K562 (cell line): ENCODE measurements at regions of chr6 and their contacts with region 1.

Region 1: GRCh38 chr6:163956571-163957407 is 542.3 kb downstream of the QKI start:
- DNase-seq: peak; percentile 88 to 92 (median 90)
- ATAC-seq: peak; percentile 99
- H3K4me3 ChIP-seq: no peak overlapping the region
- H3K27ac ChIP-seq: no peak overlapping the region
- H3K4me1 ChIP-seq: no peaks in the 10 kb centered on the region
- H3K27me3 ChIP-seq: peaks cover 26 to 36% of the 10 kb centered on the region in 2 experiments
- CTCF ChIP-seq: peak; percentile 95 to 98 (median 97)
- EP300 ChIP-seq: no peak
- POLR2A ChIP-seq: no peak
- RAD21 ChIP-seq: peak; percentile 96 to 97

Region 2: DNA sequence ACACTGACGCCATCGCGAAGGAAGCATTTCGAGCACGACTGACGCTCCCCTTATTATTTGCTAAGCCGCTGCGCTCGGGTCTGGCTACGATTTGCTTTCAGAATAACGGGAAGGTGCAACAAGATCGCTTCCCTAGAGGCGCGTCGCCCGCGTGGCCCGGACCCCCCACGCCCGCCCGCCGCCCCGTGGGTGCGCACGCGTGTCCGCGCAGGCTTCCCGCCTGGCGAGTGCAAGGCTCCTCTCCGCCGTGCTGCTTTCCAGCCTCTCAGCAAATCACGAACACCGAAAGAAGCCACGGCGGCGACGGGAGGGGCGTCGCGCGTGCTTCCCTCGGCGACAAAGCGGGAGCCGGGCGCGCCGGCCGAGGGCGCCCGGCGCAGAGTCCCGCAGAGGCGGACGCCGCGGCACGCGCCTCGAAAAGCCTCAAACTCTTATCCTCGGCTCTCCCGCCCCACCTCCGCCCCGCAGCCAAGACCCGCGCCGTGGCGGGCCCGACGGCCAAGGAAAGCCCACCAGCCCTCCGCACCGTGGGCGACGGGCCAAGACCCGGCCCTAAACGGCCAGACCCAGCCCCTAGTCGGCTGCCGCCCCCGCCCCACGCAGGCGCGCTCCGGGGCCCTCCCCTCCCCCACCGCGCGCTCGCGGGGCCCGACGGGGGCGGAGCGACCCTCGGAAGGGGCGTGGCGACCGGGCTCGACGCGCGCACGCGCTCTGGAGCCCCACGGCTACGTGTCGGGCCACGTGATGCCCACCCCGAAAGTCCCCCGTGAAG is 543.3 kb before region 1 on chr6:
- CTCF ChIA-PET with region 1: interaction called, 4 read pairs
- POLR2A ChIA-PET with region 1: no interaction called
- in situ Hi-C with region 1: no loop called
- intact Hi-C with region 1: loop called (anchors 1 kb)
- DNase-seq: peak; percentile 92 to 98 (median 97)
- ATAC-seq: peak; percentile 60
- H3K4me3 ChIP-seq: peak overlapping the region; percentile 87
- H3K27ac ChIP-seq: peak overlapping the region; percentile 94
- H3K4me1 ChIP-seq: peaks cover 0 to 12% of the 10 kb centered on the region in 2 experiments; a peak in 4 of 5 replicates
- H3K27me3 ChIP-seq: no peaks in the 10 kb centered on the region
- CTCF ChIP-seq: 0 out of 6 replicates have a peak, but pooled peaks of 1 of the 3 experiments have one; percentile 6
- EP300 ChIP-seq: no peak
- POLR2A ChIP-seq: peak; percentile 79
- RAD21 ChIP-seq: 0 out of 4 replicates have a peak, but pooled peaks of 1 of the 2 experiments have one; percentile 1

Region 3: GRCh38 chr6:163554663-163555062 is 402.1 kb before region 1 on chr6:
- CTCF ChIA-PET with region 1: no interaction called
- POLR2A ChIA-PET with region 1: no interaction called
- in situ Hi-C with region 1: no loop called
- intact Hi-C with region 1: loop called (anchors 2 kb)
- DNase-seq: peak; percentile 47 to 71 (median 54)
- ATAC-seq: peak; percentile 91
- H3K4me3 ChIP-seq: no peak overlapping the region
- H3K27ac ChIP-seq: no peak overlapping the region
- H3K4me1 ChIP-seq: no peaks in the 10 kb centered on the region
- H3K27me3 ChIP-seq: no peaks in the 10 kb centered on the region
- CTCF ChIP-seq: peak; percentile 73 to 78 (median 73)
- EP300 ChIP-seq: no peak
- POLR2A ChIP-seq: no peak
- RAD21 ChIP-seq: peak; percentile 58 to 83

Region 4: GRCh38 chr6:163651915-163652668 is 304.7 kb before region 1 on chr6:
- CTCF ChIA-PET with region 1: no interaction called
- POLR2A ChIA-PET with region 1: no interaction called
- in situ Hi-C with region 1: no loop called
- intact Hi-C with region 1: loop called (anchors 1 kb)
- DNase-seq: no peak
- ATAC-seq: no peak; the same call in 2 of the 3 replicates
- H3K4me3 ChIP-seq: no peak overlapping the region
- H3K27ac ChIP-seq: no peak overlapping the region
- H3K4me1 ChIP-seq: no peaks in the 10 kb centered on the region
- H3K27me3 ChIP-seq: peaks cover 25 to 36% of the 10 kb centered on the region in 2 experiments; a peak in 4 of 5 replicates
- CTCF ChIP-seq: no peak
- EP300 ChIP-seq: no peak
- POLR2A ChIP-seq: no peak
- RAD21 ChIP-seq: no peak

Region 5: GRCh38 chr6:163814494-163815364 is 142.1 kb before region 1 on chr6:
- CTCF ChIA-PET with region 1: no interaction called
- POLR2A ChIA-PET with region 1: no interaction called
- in situ Hi-C with region 1: no loop called
- intact Hi-C with region 1: no loop called
- DNase-seq: peak in 1 of 4 experiments; percentile 20
- ATAC-seq: peak; percentile 54
- H3K4me3 ChIP-seq: no peak overlapping the region
- H3K27ac ChIP-seq: no peak overlapping the region
- H3K4me1 ChIP-seq: peaks cover 0 to 11% of the 10 kb centered on the region in 2 experiments; a peak in 3 of 5 replicates
- H3K27me3 ChIP-seq: peaks cover 4 to 7% of the 10 kb centered on the region in 2 experiments; a peak in 4 of 5 replicates
- CTCF ChIP-seq: no peak
- EP300 ChIP-seq: peak; percentile 58
- POLR2A ChIP-seq: no peak
- RAD21 ChIP-seq: no peak

Region 6: DNA sequence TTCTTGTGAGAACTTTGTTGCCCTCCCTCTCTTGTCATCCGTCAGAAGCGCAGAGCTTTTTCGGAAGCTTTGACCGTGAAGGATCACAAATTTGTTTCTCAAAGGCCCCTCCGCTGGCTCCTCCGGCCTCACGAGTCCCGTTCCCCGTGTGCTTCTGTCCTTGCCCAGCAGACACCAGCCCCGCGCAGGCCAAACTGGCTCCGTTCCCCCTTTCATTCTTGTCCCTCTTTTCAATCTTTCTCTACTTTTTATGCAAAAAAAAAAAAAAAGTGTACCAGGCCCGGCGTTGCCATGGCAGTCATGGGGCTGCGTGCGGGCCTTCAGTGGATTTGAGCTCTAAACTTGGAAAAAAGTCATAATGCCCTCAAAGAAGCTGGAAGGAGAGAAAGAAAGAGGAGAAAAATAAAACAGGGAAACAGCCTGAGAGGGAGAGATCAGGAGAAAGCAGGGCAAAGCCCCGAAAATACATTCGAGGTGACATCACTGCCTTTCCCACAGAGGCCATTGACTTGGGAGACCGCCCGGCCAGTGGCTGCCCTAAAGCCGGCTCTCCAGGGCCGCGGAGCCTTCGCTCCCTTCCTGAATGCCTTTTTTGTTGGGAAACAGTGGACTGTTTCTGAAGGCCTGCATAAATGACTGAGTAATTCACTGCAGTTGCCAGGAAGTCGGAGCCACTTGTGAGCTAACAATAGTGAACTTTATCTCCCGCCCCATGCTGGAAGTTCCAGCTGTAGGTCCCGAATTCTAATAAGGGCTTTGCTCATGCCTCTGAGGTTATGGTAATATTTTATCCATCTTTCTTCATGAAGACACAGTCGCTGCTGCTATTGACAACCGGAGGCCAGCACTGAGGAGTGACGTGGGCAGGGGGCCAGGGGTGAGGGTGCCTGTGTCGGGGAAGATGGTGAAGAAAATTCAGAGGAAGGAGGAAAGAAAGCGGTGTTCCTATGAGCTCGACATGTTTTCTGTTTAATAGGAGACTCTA is 128.6 kb after region 1 on chr6:
- CTCF ChIA-PET with region 1: no interaction called
- POLR2A ChIA-PET with region 1: no interaction called
- in situ Hi-C with region 1: no loop called
- intact Hi-C with region 1: no loop called
- DNase-seq: no peak
- ATAC-seq: peak; percentile 29; the same call in 2 of the 3 replicates
- H3K4me3 ChIP-seq: no peak overlapping the region
- H3K27ac ChIP-seq: no peak overlapping the region
- H3K4me1 ChIP-seq: no peaks in the 10 kb centered on the region
- H3K27me3 ChIP-seq: peaks cover 0 to 41% of the 10 kb centered on the region in 2 experiments; a peak in 4 of 5 replicates
- CTCF ChIP-seq: no peak
- EP300 ChIP-seq: no peak
- POLR2A ChIP-seq: no peak
- RAD21 ChIP-seq: no peak

Region 7: GRCh38 chr6:164927288-164928056 is 970.7 kb after region 1 on chr6:
- CTCF ChIA-PET with region 1: no interaction called
- POLR2A ChIA-PET with region 1: no interaction called
- in situ Hi-C with region 1: no loop called
- intact Hi-C with region 1: loop called (anchors 5 kb)
- DNase-seq: peak; percentile 48 to 65 (median 58)
- ATAC-seq: peak; percentile 98
- H3K4me3 ChIP-seq: no peak overlapping the region
- H3K27ac ChIP-seq: no peak overlapping the region
- H3K4me1 ChIP-seq: no peaks in the 10 kb centered on the region
- H3K27me3 ChIP-seq: no peaks in the 10 kb centered on the region
- CTCF ChIP-seq: peak; percentile 78 to 92 (median 85)
- EP300 ChIP-seq: no peak
- POLR2A ChIP-seq: no peak
- RAD21 ChIP-seq: peak; percentile 95